K562 (cell line): ENCODE measurements at regions of chr4 and their contacts with region 1.

Region 1: GRCh38 chr4:54322818-54323417 is 93.8 kb downstream of the PDGFRA start:
- DNase-seq: peak; percentile 64 to 78 (median 70)
- ATAC-seq: peak; percentile 95
- H3K4me3 ChIP-seq: no peak overlapping the region
- H3K27ac ChIP-seq: no peak overlapping the region
- H3K4me1 ChIP-seq: no peaks in the 10 kb centered on the region
- H3K27me3 ChIP-seq: peaks cover 0 to 11% of the 10 kb centered on the region in 2 experiments; a peak in 3 of 5 replicates
- CTCF ChIP-seq: peak; percentile 74 to 79 (median 76)
- EP300 ChIP-seq: no peak
- POLR2A ChIP-seq: no peak
- RAD21 ChIP-seq: peak; percentile 92 to 94

Region 2: GRCh38 chr4:54433686-54434085 is 110.8 kb after region 1 on chr4:
- CTCF ChIA-PET with region 1: interaction called, 9 read pairs
- POLR2A ChIA-PET with region 1: no interaction called
- in situ Hi-C with region 1: no loop called
- intact Hi-C with region 1: loop called (anchors 2 kb)
- DNase-seq: peak in 3 of 4 experiments; percentile 11 to 45 (median 15)
- ATAC-seq: peak; percentile 67
- H3K4me3 ChIP-seq: no peak overlapping the region
- H3K27ac ChIP-seq: no peak overlapping the region
- H3K4me1 ChIP-seq: no peaks in the 10 kb centered on the region
- H3K27me3 ChIP-seq: no peaks in the 10 kb centered on the region
- CTCF ChIP-seq: peak in 2 of 3 experiments; percentile 63 to 66; a peak in 4 of 6 replicates
- EP300 ChIP-seq: no peak
- POLR2A ChIP-seq: no peak
- RAD21 ChIP-seq: peak; percentile 68 to 89

Region 3: GRCh38 chr4:54440394-54441136 is 117.6 kb after region 1 on chr4:
- CTCF ChIA-PET with region 1: interaction called, 10 read pairs
- POLR2A ChIA-PET with region 1: no interaction called
- in situ Hi-C with region 1: no loop called
- intact Hi-C with region 1: no loop called
- DNase-seq: peak; percentile 19 to 45 (median 40)
- ATAC-seq: no peak
- H3K4me3 ChIP-seq: no peak overlapping the region
- H3K27ac ChIP-seq: no peak overlapping the region
- H3K4me1 ChIP-seq: no peaks in the 10 kb centered on the region
- H3K27me3 ChIP-seq: no peaks in the 10 kb centered on the region
- CTCF ChIP-seq: peak; percentile 34 to 62 (median 44); a peak in 4 of 6 replicates
- EP300 ChIP-seq: no peak
- POLR2A ChIP-seq: no peak
- RAD21 ChIP-seq: peak; percentile 52 to 63

Region 4: GRCh38 chr4:54840992-54841768 is 518.3 kb after region 1 on chr4:
- CTCF ChIA-PET with region 1: interaction called, 3 read pairs
- POLR2A ChIA-PET with region 1: no interaction called
- in situ Hi-C with region 1: no loop called
- intact Hi-C with region 1: loop called (anchors 2 kb)
- DNase-seq: peak in 2 of 4 experiments; percentile 10 to 17
- ATAC-seq: no peak; the same call in 2 of the 3 replicates
- H3K4me3 ChIP-seq: no peak overlapping the region
- H3K27ac ChIP-seq: no peak overlapping the region
- H3K4me1 ChIP-seq: no peaks in the 10 kb centered on the region
- H3K27me3 ChIP-seq: no peaks in the 10 kb centered on the region
- CTCF ChIP-seq: peak in 2 of 3 experiments; percentile 13 to 38; a peak in 2 of 6 replicates
- EP300 ChIP-seq: no peak
- POLR2A ChIP-seq: no peak
- RAD21 ChIP-seq: peak; percentile 37 to 60

Region 5: DNA sequence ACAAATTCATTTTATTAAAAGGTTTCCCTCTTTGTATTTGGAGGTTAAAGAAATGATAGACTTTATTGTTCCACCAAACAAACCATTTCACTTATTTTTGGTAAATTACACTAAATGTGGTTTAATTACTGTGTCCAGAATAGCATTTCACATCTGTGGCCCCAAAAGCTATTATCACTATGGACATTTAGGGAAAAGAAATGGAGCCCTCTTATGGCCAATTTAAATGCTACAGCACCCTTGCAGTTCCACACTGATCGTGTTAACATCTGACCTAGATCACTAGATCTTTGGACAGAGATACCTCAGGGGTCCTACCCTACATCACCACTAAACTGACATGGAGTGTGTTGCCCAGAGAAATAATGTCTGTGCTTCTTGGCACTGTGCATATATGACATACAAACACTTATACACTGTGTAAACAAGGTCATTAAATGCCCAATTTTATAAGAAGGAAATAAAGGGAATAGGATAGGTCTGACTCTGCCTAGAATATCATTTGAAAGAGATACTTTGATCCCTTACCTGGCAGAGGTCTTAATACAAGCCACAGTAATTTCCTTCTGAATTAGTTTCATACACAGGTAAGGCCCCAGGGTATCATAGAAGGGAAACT is 638.5 kb after region 1 on chr4:
- CTCF ChIA-PET with region 1: interaction called, 22 read pairs
- POLR2A ChIA-PET with region 1: no interaction called
- in situ Hi-C with region 1: loop called (anchors 10 kb)
- intact Hi-C with region 1: loop called (anchors 2 kb)
- DNase-seq: peak; percentile 23 to 39 (median 30)
- ATAC-seq: peak; percentile 78
- H3K4me3 ChIP-seq: no peak overlapping the region
- H3K27ac ChIP-seq: no peak overlapping the region
- H3K4me1 ChIP-seq: no peaks in the 10 kb centered on the region
- H3K27me3 ChIP-seq: no peaks in the 10 kb centered on the region
- CTCF ChIP-seq: peak; percentile 39 to 66 (median 62); a peak in 5 of 6 replicates
- EP300 ChIP-seq: no peak
- POLR2A ChIP-seq: no peak
- RAD21 ChIP-seq: peak; percentile 68 to 69

Region 6: DNA sequence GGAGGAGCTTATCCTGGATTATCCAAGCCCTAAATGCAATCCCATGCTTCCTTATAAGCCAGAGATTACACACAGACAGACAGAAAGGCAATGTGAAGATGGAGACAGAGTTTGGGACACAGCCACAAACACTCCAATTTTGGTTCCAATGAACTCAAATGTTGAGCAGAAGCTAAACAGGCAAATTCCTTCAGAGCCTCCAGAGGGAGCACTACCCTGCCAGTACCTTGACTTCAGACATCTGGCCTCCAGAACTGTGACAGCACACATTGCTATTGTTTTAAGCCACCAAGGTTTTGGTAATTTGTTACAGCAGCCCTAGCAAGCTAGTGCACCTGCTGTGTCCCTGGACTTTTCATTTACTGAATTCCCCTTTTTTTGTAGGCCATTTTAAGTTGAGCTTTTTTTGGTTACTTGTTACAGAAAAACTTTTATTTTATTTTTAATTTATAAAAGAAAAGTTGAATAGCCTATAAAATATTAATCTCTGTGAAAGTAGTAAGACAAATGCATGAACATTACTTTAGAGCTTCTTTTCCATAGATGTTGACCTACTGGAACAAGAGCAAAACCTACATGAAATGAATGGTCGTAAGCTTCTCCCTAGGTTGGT is 989.7 kb after region 1 on chr4:
- CTCF ChIA-PET with region 1: no interaction called
- POLR2A ChIA-PET with region 1: no interaction called
- in situ Hi-C with region 1: loop called (anchors 25 kb)
- intact Hi-C with region 1: no loop called
- DNase-seq: peak in 2 of 4 experiments; percentile 16 to 58
- ATAC-seq: peak; percentile 94
- H3K4me3 ChIP-seq: no peak overlapping the region
- H3K27ac ChIP-seq: no peak overlapping the region
- H3K4me1 ChIP-seq: peaks cover 0 to 12% of the 10 kb centered on the region in 2 experiments; a peak in 2 of 5 replicates
- H3K27me3 ChIP-seq: peaks cover 4 to 9% of the 10 kb centered on the region in 2 experiments; a peak in 3 of 5 replicates
- CTCF ChIP-seq: peak; percentile 67 to 73 (median 68)
- EP300 ChIP-seq: no peak
- POLR2A ChIP-seq: no peak
- RAD21 ChIP-seq: peak; percentile 19 to 50; a peak in 3 of 4 replicates

Region 7: DNA sequence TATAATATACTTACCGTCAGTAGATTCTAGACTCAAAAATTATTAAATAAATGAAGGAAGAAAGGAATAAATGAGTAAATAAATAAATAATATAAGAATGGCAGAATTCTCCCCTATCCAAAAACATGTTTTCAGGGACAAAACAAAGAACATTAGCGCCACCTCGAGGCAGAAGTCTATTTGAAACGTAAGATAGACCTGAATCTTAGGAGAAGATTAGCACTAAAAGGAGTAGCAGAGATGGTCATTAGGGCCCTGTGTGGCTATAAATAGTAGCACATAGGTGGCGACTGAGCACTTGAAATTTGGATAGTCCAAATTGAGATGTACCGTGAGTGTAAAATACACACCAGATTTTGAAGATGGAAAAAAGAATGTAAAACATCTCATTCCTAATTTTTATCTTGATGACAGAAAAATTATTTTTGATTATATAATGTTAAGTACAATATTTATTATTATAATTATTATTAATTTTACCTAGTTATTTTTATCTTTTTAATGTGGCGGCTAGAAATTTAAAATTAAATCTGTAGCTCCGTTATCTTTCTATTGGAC is 998.9 kb after region 1 on chr4:
- CTCF ChIA-PET with region 1: interaction called, 4 read pairs
- POLR2A ChIA-PET with region 1: no interaction called
- in situ Hi-C with region 1: loop called (anchors 25 kb)
- intact Hi-C with region 1: loop called (anchors 5 kb)
- DNase-seq: peak; percentile 62 to 87 (median 64)
- ATAC-seq: peak; percentile 97
- H3K4me3 ChIP-seq: no peak overlapping the region
- H3K27ac ChIP-seq: no peak overlapping the region
- H3K4me1 ChIP-seq: no peaks in the 10 kb centered on the region
- H3K27me3 ChIP-seq: no peaks in the 10 kb centered on the region
- CTCF ChIP-seq: peak; percentile 68 to 91 (median 74); a peak in 5 of 6 replicates
- EP300 ChIP-seq: no peak
- POLR2A ChIP-seq: no peak
- RAD21 ChIP-seq: peak; percentile 87 to 89